AG04449 (cell line): ENCODE measurements at regions of chr2 and their contacts with region 1.

Region 1: DNA sequence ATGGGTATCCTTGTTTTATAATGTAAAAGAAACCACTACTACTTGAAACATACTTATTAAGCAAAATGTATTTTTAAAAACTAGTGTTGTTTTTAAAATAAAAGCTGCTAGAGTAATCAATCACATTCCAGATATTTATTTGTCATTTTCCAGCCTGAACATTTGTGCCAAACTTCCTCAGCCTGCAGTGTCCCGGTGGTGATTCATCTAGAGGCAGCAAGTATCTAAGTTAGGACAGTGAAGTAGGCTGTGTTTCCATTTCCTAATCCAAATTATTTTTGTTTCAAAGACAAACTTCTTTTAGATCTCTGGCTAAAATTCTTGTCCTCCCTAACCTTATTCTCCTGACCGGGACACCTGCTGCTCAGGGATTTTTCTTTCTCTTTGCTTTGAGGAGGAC is 12.8 kb upstream of the GCG start:
- DNase-seq: no peak
- H3K4me3 ChIP-seq: no peak overlapping the region
- CTCF ChIP-seq: no peak

Region 2: GRCh38 chr2:162153608-162154224 is 11.1 kb before region 1 on chr2:
- CTCF ChIA-PET with region 1: interaction called, 23 read pairs
- POLR2A ChIA-PET with region 1: no interaction called
- DNase-seq: no peak
- H3K4me3 ChIP-seq: no peak overlapping the region
- CTCF ChIP-seq: peak; percentile 70